Cardiac septum (tissue), 1 donor: ENCODE measurements at regions of chr6 and their contacts with region 1.

Region 1: GRCh38 chr6:56699066-56699654 is 56.5 kb upstream of the DST start:
- DNase-seq: no peak

Region 2: GRCh38 chr6:56370561-56371211 is 328.5 kb before region 1 on chr6:
- intact Hi-C with region 1: loop called (anchors 10 kb)
- DNase-seq: no peak

Region 3: DNA sequence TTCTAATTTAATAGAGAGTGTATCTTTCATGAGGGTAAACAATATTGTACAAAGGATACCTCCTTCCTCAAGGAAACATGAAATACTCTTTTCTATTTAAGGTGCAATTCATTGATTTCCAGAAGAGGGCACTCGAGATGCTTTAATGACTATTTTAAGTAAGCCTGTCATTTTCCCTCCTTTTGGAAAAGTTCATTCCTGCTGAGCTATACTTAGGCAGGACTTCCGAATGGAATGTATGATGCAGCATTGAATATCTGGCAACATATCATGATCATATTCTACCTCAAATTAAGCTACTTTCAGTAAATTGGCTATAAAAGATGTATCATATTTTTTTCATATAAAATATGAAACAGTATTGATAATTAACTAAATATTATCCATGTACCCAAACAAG is 61.5 kb before region 1 on chr6:
- intact Hi-C with region 1: loop called (anchors 2 kb)
- DNase-seq: no peak

Region 4: GRCh38 chr6:56730663-56731529 is 31.7 kb after region 1 on chr6:
- intact Hi-C with region 1: no loop called
- DNase-seq: no peak